ENCODE measurements at regions of chr7 and their contacts with region 1.

Region 1: DNA sequence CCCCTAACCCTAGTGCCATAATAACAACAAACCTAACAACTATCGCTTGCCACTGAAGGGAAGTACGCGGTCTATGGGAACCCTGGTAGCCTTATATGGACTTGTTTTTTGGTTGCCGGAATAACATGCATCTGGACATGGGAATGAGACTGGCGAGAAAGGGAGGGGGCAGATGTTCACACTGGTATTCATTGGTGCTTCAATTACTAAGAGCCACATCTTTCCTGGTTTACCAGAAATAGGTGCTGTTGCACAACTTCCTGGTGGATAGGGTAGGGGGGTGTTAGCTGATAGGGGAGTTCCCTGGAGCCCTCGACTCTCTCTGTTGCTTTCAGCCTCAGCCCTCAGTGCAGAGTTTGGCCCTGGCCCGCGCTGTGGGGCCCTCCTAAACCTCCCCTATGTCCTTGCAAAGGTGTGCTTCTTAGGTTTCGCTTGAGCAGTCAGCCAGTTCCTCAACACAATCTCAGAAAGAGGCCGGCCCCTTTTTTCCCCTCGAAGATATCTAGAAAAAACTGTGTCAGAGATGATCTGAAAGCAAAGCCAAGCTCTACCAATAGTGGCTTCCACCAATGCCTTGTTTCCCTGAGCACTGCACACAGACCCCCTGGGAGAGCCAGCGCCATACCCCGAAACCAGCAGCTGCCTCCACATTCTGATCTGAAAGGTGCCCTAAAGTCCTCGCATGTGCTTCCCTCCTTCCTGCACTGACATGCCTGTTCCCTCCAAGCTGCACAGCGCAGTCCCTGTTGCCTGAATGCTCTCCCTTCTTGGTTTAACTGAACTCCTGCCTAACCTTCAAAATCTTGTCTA is 13.5 kb downstream of the TBXAS1 start:
- DNase-seq: no peak
- H3K4me3 Mint-ChIP-seq: no peak overlapping the region
- H3K27ac Mint-ChIP-seq: no peak overlapping the region
- H3K4me1 Mint-ChIP-seq: peaks cover 22% of the 10 kb centered on the region
- H3K27me3 Mint-ChIP-seq: no peaks in the 10 kb centered on the region
- CTCF ChIP-seq: no peak

Region 2: DNA sequence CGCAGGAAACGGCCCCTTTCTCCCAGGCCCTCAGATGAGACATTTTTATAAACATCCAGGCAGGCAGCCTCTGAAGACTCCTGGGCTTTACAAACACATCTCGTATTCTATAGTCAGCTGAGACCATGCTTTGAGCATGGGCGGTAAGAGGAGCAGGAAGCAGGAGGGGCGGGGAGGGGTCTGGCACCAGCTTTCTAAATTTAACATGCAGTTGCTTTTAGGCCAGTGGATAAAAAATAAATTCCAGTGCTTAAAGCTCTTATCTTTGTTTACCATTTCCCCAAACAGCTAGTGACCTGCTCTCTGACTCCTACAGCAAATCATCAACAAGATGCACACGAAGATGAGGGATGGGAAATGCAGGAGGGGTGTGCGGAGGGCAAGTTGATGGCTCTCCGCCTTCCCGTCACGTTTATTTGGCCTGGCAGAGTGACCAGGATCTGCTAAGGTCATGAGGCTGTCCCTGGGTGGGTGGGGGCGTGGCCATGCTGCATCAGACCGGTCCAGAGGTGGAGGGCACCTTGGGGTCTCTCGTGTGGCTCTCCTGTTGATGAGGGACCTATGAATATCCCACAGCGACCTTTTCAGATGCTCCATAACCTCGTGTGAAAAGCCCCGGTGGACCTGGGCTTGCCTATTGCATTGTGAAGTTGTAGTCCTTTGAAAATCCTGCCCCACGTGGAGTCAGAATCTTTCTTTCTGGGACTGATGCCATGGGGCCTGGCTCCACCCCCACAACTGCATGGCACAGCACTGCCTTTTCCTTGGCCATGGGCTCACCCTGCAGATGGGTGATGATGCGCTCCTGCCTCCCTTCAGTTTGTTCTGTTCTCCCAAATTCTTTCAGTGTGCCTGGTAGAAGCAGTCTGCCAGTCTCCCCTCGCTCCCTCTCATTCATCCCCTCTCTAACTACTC is 152.7 kb after region 1 on chr7:
- CTCF ChIA-PET with region 1: no interaction called
- intact Hi-C with region 1: loop called (anchors 5 kb)
- DNase-seq: no peak
- H3K4me3 Mint-ChIP-seq: no peak overlapping the region
- H3K27ac Mint-ChIP-seq: no peak overlapping the region
- H3K4me1 Mint-ChIP-seq: no peaks in the 10 kb centered on the region
- H3K27me3 Mint-ChIP-seq: no peaks in the 10 kb centered on the region
- CTCF ChIP-seq: no peak

Measured in Calu3 (cell line).